ENCODE measurements at regions of chr6 and their contacts with region 1.

Region 1: GRCh38 chr6:109212683-109213082 is 117.4 kb downstream of the CEP57L1 start:
- DNase-seq: no peak

Region 2: DNA sequence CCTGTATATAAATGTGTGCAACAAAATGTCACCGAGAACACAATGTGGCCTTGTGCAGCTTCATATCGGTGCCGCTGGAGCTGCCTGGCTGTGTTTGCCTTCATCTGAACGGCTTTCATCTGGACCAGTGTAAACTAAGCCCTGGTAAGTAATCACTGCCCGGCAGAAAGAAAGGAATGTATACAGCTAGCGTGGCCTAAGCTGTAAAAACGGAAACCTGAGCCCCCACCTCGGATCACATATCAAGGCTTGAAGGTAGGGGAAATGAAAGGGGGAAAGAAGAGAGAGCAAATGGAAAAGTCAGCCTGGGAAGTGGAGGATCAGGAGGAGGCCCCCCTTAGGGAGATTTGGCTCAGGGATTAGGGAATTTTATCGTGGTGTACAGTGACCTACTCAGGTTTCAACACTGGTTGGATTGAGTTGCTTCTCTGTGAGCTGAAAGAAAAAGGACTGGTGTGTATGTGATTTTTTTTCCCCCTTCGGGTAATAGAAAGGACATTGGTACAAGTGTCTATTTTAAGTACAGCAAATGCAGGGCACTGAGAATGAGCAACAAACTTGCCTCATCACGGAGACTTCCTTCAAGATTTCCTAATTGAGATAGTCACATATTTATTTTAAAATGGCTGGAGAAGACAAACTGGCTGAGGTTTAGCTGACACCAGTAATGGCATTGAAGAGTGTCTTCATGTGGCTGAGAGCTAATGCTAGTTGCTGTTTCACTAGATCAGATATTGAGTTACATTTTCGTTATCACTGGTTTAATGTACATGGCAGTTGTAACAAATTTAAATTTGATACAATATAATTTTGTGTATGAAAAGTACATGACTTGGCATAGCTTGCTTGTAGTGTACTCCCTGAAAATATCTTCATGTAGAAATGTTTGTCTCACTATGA is 1719.3 kb before region 1 on chr6:
- intact Hi-C with region 1: no loop called
- DNase-seq: no peak

Region 3: GRCh38 chr6:108243836-108244235 is 968.8 kb before region 1 on chr6:
- intact Hi-C with region 1: loop called in 1 of 2 experiments (anchors 5 kb)
- DNase-seq: no peak